ENCODE measurements at regions of chr17 and their contacts with region 1.

Region 1: DNA sequence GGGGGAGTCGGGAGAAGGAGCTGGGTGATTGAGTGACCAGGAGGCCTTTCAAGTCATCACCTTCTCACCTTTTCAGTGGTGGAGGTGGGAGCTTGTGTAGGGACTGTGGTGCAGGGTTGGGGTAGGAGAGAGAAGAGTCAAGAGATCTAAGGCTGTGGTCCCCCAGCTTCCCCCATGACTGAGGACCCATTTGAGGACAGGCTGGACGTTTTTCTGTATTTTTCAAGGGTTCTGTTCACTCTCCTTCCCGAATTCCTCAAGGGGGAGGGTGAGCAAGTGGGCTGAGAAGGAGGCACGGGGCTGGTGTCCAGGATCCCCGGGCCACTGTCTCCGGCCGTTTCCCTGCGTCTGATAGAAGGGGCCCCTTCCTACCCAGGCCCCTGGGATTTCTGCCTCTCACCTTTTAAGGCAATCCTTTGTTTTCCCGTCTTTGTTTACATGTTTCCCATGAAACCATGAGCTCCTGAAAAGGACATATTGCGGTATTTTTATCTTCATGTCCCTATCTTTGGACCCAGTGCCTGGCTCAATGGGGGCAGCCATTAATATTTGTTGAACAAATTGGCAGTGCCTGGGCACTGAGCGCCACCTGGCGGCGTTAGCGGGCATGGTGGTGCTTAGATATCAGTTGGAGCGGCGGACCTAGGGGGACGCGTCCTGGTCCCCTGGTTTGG is 9.2 kb upstream of the CD300A start:
- DNase-seq: peak; percentile 75 to 90 (median 84)
- H3K4me3 ChIP-seq: peak overlapping the region in 13 of 59 donors; percentile 3 to 32 (median 19)
- H3K27ac ChIP-seq: peak overlapping the region in 18 of 59 donors; percentile 5 to 63 (median 40)
- H3K27me3 ChIP-seq: no peaks in the 10 kb centered on the region
- CTCF ChIP-seq: peak; percentile 90 to 99 (median 96)

Region 2: DNA sequence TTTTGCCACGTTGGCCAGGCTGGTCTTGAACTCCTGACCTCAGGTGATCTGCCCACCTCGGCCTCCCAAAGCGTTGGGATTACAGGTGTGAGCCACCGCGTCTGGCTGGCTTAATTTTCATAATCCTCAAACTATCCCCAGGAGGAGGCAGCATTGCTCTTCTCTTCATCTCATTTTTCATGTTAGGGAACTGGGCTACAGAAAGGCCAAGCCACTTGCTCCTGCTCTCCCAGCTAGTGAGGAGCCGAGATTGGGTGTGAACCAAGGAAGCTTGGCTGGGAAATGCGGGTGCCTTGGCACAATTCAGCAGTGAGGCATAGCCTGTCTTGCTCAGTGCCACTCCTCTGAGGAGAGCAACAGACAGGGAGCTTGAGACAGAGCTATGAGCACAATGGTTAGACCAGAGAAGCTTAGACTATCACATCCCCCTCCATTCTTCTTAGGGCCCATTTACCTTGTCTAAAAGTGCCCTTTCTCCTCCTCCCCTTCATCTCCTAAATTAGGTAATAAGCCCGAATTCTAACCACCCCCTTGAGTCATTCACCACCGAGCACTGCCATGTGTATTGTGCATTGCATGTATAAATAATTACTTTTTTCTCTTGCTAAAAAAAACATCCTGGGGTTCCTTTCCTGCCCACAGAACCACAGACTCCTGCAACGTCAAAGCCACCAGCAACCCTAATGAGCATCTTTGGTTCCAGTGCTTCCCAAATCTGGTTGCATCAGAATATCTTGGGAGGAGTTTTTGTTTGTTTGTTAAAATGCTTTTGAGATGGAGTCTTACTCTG is 151.2 kb before region 1 on chr17:
- intact Hi-C with region 1: loop called (anchors 2 to 5 kb)
- DNase-seq: peak in 1 of 10 donors; percentile 27
- H3K4me3 ChIP-seq: no peak overlapping the region
- H3K27ac ChIP-seq: peak overlapping the region in 10 of 59 donors; percentile 7 to 73 (median 45)
- H3K27me3 ChIP-seq: no peaks in the 10 kb centered on the region
- CTCF ChIP-seq: peak in 54 of 56 donors; percentile 6 to 80 (median 46)

Region 3: GRCh38 chr17:74368092-74369081 is 88.9 kb before region 1 on chr17:
- intact Hi-C with region 1: loop called in 1 of 2 experiments (anchors 2 kb)
- DNase-seq: peak; percentile 73 to 89 (median 80)
- H3K4me3 ChIP-seq: peak overlapping the region in 1 of 59 donors; percentile 10
- H3K27ac ChIP-seq: peak overlapping the region in 38 of 59 donors; percentile 4 to 82 (median 58)
- H3K27me3 ChIP-seq: peaks cover 0 to 3% (median 0%) of the 10 kb centered on the region in 45 donors
- CTCF ChIP-seq: peak; percentile 71 to 98 (median 92)

Region 4: DNA sequence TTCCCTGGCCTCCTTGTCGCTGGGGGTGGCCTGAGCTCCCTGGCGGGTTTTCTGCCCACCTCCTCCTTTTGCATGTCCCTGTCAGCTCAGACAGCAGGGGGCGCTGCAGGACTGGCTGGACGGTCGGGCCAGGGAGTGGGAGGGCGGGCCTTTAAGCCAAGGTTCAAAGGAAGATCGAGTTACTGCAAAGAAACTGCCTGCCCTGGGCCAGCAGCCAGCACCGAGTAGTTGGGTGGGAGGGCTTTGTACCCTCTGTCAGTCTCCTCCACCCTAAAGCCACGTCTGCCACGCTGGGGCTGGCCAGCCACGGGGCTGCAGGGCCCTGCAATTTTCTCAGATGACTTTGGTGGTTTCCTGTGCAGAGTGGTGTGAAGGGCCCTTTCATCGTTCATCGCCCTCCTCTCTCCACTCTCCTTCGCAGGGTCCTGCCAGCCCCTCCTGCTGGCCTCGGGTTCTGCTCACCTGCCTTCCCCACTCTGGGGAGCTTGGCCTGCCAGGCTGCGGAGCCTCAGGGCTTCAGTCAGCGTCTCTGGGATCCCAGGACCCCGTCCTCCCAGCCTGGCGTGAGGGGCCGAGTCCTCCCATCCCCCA is 77.7 kb before region 1 on chr17:
- intact Hi-C with region 1: loop called (anchors 1 kb)
- DNase-seq: peak; percentile 86 to 96 (median 90)
- H3K4me3 ChIP-seq: peak overlapping the region in 3 of 59 donors; percentile 23 to 24 (median 23)
- H3K27ac ChIP-seq: peak overlapping the region in 15 of 59 donors; percentile 0 to 77 (median 25)
- H3K27me3 ChIP-seq: no peaks in the 10 kb centered on the region
- CTCF ChIP-seq: peak; percentile 77 to 99 (median 96)

Region 5: GRCh38 chr17:74493381-74493833 is 36.1 kb after region 1 on chr17:
- intact Hi-C with region 1: loop called in 1 of 2 experiments (anchors 5 kb)
- DNase-seq: peak; percentile 57 to 85 (median 72)
- H3K4me3 ChIP-seq: no peak overlapping the region
- H3K27ac ChIP-seq: no peak overlapping the region
- H3K27me3 ChIP-seq: no peaks in the 10 kb centered on the region
- CTCF ChIP-seq: peak; percentile 68 to 95 (median 88)

Measured in dorsolateral prefrontal cortex (tissue), 120 donors.